ENCODE measurements at regions of chr11 and their contacts with region 1.

Region 1: GRCh38 chr11:65575568-65576231 is at the start of gene EHBP1L1:
- DNase-seq: peak; percentile 63 to 81 (median 72)
- H3K4me3 ChIP-seq: peak within 1 kb of the TSS; percentile 68 to 100 (median 98)
- H3K4me3 Mint-ChIP-seq: peak within 1 kb of the TSS; percentile 90 to 95
- H3K27ac ChIP-seq: peak within 1 kb of the TSS; percentile 85 to 93
- H3K27ac Mint-ChIP-seq: peak within 1 kb of the TSS; percentile 93 to 99 (median 97)
- H3K4me1 ChIP-seq: peaks cover 63 to 83% of the 10 kb centered on the region in 2 donors
- H3K4me1 Mint-ChIP-seq: peaks cover 62% of the 10 kb centered on the region
- H3K27me3 ChIP-seq: no peaks in the 10 kb centered on the region
- H3K27me3 Mint-ChIP-seq: no peaks in the 10 kb centered on the region
- CTCF ChIP-seq: no peak
- polyA plus RNA-seq, gene EHBP1L1: 29.6 to 507 (median 42.6) TPM

Region 2: DNA sequence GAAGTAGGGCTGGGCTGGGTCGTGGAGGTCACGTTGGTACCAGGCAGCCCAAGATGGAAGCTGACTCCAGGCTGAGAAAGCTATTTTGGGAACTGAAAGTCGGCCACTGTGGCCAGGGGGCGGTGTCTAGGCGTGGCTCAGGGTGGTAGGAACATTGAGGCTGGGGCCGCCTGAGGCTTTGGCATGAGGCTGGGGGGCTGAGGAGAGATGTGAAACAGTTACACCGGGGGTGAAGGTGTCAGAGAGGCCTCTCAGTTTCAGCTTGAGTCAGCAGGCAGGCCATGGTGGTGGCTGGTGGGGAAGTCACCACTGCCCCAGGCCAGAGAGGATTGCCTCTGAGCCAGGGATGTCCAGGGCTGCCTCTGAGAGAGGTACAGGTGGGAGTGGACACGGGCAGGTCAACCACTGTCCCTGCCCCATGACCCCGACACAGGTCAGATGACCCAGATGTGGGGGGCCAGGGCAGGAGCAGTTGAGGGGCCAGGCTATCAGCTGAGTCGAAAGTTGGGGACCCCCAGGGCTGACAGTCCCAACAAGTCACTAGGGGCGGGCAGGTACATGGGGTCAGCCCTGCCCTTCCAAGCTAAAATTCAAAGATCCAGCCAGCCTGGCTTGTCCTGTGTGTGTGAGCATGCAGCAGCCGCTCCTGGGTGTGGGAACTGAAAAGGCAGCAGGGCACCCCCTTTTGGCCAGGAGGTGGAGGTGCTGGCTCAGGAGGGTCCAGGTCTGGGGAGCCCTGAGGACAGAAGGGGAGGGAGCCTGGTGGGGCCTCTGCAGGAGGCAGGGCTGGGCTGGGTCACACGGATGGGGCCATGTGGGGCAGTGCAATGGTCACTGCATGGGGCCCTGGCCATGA is 12.7 kb after region 1 on chr11:
- intact Hi-C with region 1: loop called in 1 of 2 experiments (anchors 1 kb)
- DNase-seq: peak; percentile 66 to 83 (median 81)
- H3K4me3 ChIP-seq: peak overlapping the region; percentile 14 to 74 (median 16)
- H3K4me3 Mint-ChIP-seq: peak overlapping the region; percentile 73 to 87
- H3K27ac ChIP-seq: peak overlapping the region; percentile 86 to 89
- H3K27ac Mint-ChIP-seq: peak overlapping the region; percentile 91 to 98 (median 95)
- H3K4me1 ChIP-seq: peaks cover 44 to 63% of the 10 kb centered on the region in 2 donors
- H3K4me1 Mint-ChIP-seq: peaks cover 57% of the 10 kb centered on the region
- H3K27me3 ChIP-seq: no peaks in the 10 kb centered on the region
- H3K27me3 Mint-ChIP-seq: no peaks in the 10 kb centered on the region
- CTCF ChIP-seq: peak; percentile 73

Region 3: DNA sequence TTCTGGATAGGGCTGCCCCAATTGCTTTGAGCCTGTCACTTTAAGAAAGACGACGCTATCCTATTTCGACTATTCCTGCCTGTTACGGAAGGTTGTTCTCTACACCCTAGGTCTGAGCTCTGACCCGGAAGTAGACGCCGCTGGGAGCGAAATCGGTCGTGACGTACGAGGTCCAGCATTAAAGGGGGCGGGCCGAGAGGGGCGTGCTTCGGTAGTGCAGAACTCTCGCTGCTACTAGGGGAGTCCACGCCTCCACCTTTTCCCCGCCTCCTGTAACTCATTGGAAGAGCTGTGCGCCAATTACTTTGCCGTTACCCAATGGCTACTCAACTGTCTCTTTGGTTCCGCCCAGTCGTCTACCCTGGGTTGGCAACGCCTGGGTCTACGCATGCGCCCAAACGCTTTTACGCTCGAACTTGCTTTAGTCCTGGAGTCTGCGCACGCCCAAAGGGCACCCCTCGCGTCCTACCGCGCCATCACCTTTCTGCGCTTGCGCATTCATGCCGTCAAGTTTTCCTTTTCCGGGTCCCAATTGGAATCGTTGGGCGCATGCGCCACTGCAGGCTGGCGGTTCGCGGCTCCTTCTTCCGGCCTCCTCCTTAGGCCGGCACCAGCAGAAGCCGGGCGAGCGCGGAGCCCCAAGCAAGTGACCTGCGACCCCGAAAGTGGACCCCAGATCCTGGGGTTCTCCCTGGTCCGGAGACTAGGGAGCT is 39.7 kb after region 1 on chr11 and contains the start of gene PCNX3:
- intact Hi-C with region 1: loop called (anchors 2 to 5 kb)
- DNase-seq: peak; percentile 100
- H3K4me3 ChIP-seq: peak within 1 kb of the TSS; percentile 79 to 96 (median 93)
- H3K4me3 Mint-ChIP-seq: peak within 1 kb of the TSS; percentile 89 to 96
- H3K27ac ChIP-seq: peak within 1 kb of the TSS; percentile 94 to 96
- H3K27ac Mint-ChIP-seq: peak within 1 kb of the TSS; percentile 96 to 99 (median 98)
- H3K4me1 ChIP-seq: peaks cover 40 to 54% of the 10 kb centered on the region in 2 donors
- H3K4me1 Mint-ChIP-seq: peaks cover 39% of the 10 kb centered on the region
- H3K27me3 ChIP-seq: no peaks in the 10 kb centered on the region
- H3K27me3 Mint-ChIP-seq: no peaks in the 10 kb centered on the region
- CTCF ChIP-seq: no peak
- polyA plus RNA-seq, gene PCNX3: 0.58 to 36.4 (median 1.7) TPM

Measured in CD14-positive monocyte (primary cell).